H1 (cell line): ENCODE measurements at regions of chr2 and their contacts with region 1.

Region 1: GRCh38 chr2:196277002-196277401 is 105.6 kb upstream of the STK17B start:
- DNase-seq: no peak
- H3K4me3 ChIP-seq: no peak overlapping the region
- H3K27ac ChIP-seq: no peak overlapping the region
- H3K4me1 ChIP-seq: no peaks in the 10 kb centered on the region
- H3K27me3 ChIP-seq: no peaks in the 10 kb centered on the region
- CTCF ChIP-seq: peak in 2 of 3 experiments; percentile 50 to 55; a peak in 2 of 4 replicates
- EP300 ChIP-seq: no peak
- POLR2A ChIP-seq: no peak
- RAD21 ChIP-seq: peak; percentile 62 to 65

Region 2: GRCh38 chr2:196259507-196260481 is 17.2 kb before region 1 on chr2:
- CTCF ChIA-PET with region 1: interaction called, 13 read pairs
- POLR2A ChIA-PET with region 1: no interaction called
- DNase-seq: no peak
- H3K4me3 ChIP-seq: no peak overlapping the region
- H3K27ac ChIP-seq: no peak overlapping the region
- H3K4me1 ChIP-seq: peaks cover 0 to 2% (median 0%) of the 10 kb centered on the region in 4 experiments; a peak in 1 of 7 replicates
- H3K27me3 ChIP-seq: no peaks in the 10 kb centered on the region
- CTCF ChIP-seq: no peak
- EP300 ChIP-seq: no peak
- POLR2A ChIP-seq: no peak
- RAD21 ChIP-seq: no peak

Region 3: DNA sequence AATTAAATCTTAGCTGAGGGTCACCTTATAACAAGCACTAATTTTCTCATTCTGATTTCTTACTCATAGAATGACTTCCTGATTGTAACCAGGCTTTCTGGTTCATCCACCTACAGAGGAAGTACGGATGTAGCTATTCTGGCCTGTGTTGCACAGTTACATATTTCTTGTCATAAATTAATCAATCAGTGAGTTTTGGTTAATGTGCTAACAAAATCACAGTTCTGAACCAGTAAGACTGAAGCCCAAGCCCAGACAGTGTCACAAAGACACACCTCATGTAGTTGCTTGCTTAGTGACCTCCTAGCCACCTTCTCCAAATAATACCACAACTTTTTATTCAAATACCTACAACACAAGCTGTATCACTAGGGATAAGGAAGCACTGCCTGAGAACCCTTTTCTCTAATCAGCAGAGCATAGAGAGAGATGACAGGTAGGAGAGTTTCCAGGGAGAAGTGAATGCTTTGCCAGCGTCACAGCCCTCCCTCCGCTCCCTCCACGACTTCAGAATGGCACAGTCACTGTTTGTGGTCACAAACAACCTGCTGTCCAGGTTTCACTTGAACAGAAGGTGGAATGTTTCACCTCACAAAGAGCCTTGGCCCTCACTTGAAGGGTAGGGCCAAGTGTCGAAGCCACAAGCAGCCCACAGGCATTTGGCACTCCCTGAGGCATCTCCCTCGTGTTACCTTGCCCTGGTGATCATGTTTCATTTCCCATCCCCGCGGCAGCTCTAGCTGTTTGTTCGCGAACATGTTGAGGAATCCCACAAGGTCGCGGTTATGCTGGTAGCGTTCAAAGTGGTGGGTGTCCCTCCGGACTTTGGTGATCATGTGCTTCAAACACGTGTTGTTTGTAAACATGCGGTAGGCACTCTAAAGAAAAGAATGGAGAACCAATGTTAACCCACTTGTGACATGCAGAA is 15.1 kb after region 1 on chr2:
- CTCF ChIA-PET with region 1: interaction called, 10 read pairs
- POLR2A ChIA-PET with region 1: no interaction called
- DNase-seq: no peak
- H3K4me3 ChIP-seq: no peak overlapping the region
- H3K27ac ChIP-seq: no peak overlapping the region; the same call in 1 of the 2 replicates
- H3K4me1 ChIP-seq: no peaks in the 10 kb centered on the region
- H3K27me3 ChIP-seq: no peaks in the 10 kb centered on the region
- CTCF ChIP-seq: no peak
- EP300 ChIP-seq: no peak
- POLR2A ChIP-seq: no peak
- RAD21 ChIP-seq: no peak

Region 4: DNA sequence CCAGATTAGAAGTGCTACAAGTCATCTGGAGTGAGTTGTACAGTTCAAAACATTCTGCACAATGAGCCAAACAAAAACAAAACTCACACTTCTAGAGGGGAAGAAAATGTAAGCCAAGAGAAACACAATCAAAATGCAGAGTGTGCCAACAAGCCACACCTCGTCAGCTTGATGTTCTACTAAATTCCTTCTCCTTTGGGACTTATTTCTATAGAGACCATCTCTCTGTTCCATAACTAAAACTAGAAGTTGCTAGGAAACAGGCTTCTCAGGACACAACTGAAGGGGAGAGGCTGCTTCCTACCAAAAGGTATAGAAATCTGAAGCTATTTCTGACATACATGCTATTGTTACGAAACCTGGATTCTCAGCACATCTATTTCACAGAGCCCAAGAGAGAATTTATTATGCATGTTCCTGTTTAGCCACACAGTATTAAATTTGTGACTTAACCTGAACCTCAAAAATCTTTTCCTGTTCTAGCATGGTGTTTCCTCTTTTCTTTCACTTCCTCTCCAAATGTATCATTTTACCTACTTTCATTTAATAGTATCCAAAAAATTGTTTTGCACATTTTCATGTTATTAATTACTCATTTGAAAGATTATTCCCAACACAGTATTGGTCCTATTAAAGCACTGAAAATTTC is 151.1 kb after region 1 on chr2:
- CTCF ChIA-PET with region 1: no interaction called
- POLR2A ChIA-PET with region 1: no interaction called
- DNase-seq: no peak
- H3K4me3 ChIP-seq: no peak overlapping the region
- H3K27ac ChIP-seq: no peak overlapping the region
- H3K4me1 ChIP-seq: no peaks in the 10 kb centered on the region
- H3K27me3 ChIP-seq: no peaks in the 10 kb centered on the region
- CTCF ChIP-seq: no peak
- EP300 ChIP-seq: no peak
- POLR2A ChIP-seq: no peak
- RAD21 ChIP-seq: no peak